ENCODE measurements at regions of chr9 and their contacts with region 1.

Region 1: GRCh38 chr9:109469646-109470358 is 28.3 kb downstream of the PTPN3 start:
- DNase-seq: peak; percentile 84 to 91 (median 88)
- H3K4me3 ChIP-seq: no peak overlapping the region
- H3K27ac ChIP-seq: no peak overlapping the region
- H3K4me1 ChIP-seq: no peaks in the 10 kb centered on the region
- H3K27me3 ChIP-seq: peaks cover 3 to 89% (median 39%) of the 10 kb centered on the region in 5 experiments

Region 2: GRCh38 chr9:109244157-109245132 is 225.4 kb before region 1 on chr9:
- CTCF ChIA-PET with region 1: interaction called, 13 read pairs
- POLR2A ChIA-PET with region 1: no interaction called
- DNase-seq: peak; percentile 76 to 87 (median 80)
- H3K4me3 ChIP-seq: no peak overlapping the region
- H3K27ac ChIP-seq: no peak overlapping the region
- H3K4me1 ChIP-seq: no peaks in the 10 kb centered on the region
- H3K27me3 ChIP-seq: peaks cover 10 to 67% (median 25%) of the 10 kb centered on the region in 5 experiments

Region 3: DNA sequence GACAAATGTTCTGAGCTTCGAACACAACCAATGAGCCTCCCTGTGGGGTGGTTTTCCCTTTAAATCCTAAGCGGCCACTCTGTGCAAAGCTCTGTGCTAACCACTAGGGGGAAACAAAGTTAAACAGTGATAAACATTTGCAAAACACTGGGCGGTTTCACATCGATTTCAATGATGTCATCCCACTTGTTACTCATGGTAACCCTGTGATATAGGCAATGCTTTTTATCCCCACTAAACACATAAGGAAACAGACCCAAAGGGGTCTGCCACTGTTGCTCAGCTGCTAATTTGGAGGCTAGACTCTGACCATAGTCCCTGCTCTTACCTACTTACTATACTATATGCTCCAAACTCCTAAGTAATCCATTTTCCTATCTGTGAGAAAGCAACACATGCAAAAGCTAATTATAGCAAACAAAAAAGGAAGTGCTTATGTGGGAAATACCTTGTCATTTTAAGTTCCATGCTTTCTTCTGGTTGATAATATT is 29.0 kb before region 1 on chr9:
- CTCF ChIA-PET with region 1: interaction called, 13 read pairs
- POLR2A ChIA-PET with region 1: interaction called, 4 read pairs
- DNase-seq: peak; percentile 75 to 80 (median 79)
- H3K4me3 ChIP-seq: no peak overlapping the region
- H3K27ac ChIP-seq: no peak overlapping the region
- H3K4me1 ChIP-seq: peaks cover 0 to 3% (median 0%) of the 10 kb centered on the region in 4 experiments
- H3K27me3 ChIP-seq: peaks cover 5 to 91% (median 25%) of the 10 kb centered on the region in 5 experiments

Region 4: DNA sequence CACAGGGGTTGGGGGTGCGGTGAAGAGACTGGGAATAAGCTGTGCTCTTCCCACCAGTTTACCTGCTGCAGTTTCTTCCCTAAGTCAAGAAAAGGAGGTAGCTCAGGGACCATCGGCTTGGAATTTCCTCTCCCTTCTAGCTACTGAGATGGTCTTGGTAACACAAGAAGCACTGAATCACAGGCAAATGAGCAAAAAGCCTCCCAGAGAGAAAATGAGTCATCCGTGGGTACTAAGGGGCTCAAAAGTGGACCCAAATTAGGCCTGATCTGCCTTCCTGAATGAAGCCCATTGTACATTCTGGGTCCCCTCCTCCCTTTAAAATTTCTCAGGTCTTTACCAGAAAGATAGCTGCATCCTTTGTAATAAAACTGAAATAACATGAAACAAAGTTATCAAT is 21.6 kb before region 1 on chr9:
- CTCF ChIA-PET with region 1: interaction called, 19 read pairs
- POLR2A ChIA-PET with region 1: no interaction called
- DNase-seq: peak in 1 of 3 donors; percentile 10
- H3K4me3 ChIP-seq: no peak overlapping the region
- H3K27ac ChIP-seq: no peak overlapping the region
- H3K4me1 ChIP-seq: peaks cover 0 to 3% (median 0%) of the 10 kb centered on the region in 4 experiments
- H3K27me3 ChIP-seq: peaks cover 12 to 93% (median 48%) of the 10 kb centered on the region in 5 experiments

Region 5: DNA sequence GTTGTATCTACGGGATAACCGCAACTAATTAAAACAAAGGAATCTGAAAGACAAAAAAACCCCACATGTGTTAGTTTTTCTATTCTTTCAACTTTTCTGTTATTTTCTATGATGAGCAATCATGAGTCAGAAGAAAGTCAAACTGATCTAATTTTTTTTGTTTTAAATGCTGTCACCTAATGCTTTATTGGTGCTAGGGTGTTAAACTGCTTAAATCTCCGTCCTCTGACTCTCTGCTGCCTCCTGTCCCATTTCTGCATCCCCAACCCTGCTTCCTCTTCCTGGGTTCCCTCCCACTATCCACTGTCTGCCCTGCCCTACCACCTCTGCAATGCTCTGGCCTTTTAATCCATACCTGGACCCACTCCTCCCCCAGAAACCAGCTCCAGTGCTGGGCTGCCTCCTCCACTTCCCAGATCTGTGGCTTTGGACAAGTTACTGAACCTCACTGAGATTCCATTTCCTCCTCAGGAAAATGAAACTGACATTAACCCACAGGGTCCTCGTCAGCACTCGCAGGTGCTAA is 12.7 kb after region 1 on chr9:
- CTCF ChIA-PET with region 1: interaction called, 17 read pairs
- POLR2A ChIA-PET with region 1: interaction called, 4 read pairs
- DNase-seq: no peak
- H3K4me3 ChIP-seq: no peak overlapping the region
- H3K27ac ChIP-seq: no peak overlapping the region
- H3K4me1 ChIP-seq: no peaks in the 10 kb centered on the region
- H3K27me3 ChIP-seq: peaks cover 0 to 96% (median 36%) of the 10 kb centered on the region in 5 experiments

Region 6: DNA sequence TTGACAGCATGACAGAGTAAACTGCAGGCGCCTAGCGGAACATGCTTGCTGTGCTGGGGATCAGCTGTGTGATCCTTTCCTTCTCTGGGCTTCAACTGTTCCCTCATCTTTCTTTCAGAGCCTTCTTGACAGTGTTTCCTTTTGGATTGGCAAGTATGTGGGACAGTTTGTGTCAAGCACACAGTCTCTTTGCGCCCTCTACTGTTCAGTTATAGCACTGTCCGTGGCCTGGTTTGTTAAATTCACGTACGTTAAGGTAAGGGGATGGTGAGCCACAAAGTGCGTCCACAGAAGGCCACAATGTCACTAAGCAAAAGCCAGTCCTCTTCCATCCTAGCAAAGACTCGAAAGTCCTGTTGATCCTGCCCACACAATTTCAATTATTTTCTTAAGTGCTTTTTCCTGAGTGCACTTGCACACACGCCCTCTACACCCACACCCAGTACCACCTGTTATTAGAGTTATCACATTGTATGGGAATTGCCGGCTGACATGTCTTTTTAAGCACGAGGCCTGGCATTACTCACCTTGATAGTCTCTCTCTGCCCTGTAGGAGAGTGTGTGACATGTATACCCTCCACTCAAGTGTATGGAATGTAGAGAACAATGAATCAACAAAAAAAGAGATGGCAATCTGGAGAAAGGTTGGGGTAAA is 50.8 kb after region 1 on chr9:
- CTCF ChIA-PET with region 1: no interaction called
- POLR2A ChIA-PET with region 1: no interaction called
- DNase-seq: peak; percentile 47 to 73 (median 65)
- H3K4me3 ChIP-seq: no peak overlapping the region
- H3K27ac ChIP-seq: no peak overlapping the region
- H3K4me1 ChIP-seq: no peaks in the 10 kb centered on the region
- H3K27me3 ChIP-seq: peaks cover 0 to 84% (median 20%) of the 10 kb centered on the region in 5 experiments